PC-3 (cell line): ENCODE measurements at regions of chr11 and their contacts with region 1.

Region 1: GRCh38 chr11:111586388-111586831 is 15.8 kb upstream of the SIK2 start:
- DNase-seq: peak; percentile 85
- ATAC-seq: peak; percentile 75
- H3K4me3 ChIP-seq: no peak overlapping the region
- H3K27ac ChIP-seq: no peak overlapping the region
- H3K4me1 ChIP-seq: peaks cover 5% of the 10 kb centered on the region; the same call in 1 of the 2 replicates
- H3K27me3 ChIP-seq: no peaks in the 10 kb centered on the region
- CTCF ChIP-seq: peak; percentile 92

Region 2: DNA sequence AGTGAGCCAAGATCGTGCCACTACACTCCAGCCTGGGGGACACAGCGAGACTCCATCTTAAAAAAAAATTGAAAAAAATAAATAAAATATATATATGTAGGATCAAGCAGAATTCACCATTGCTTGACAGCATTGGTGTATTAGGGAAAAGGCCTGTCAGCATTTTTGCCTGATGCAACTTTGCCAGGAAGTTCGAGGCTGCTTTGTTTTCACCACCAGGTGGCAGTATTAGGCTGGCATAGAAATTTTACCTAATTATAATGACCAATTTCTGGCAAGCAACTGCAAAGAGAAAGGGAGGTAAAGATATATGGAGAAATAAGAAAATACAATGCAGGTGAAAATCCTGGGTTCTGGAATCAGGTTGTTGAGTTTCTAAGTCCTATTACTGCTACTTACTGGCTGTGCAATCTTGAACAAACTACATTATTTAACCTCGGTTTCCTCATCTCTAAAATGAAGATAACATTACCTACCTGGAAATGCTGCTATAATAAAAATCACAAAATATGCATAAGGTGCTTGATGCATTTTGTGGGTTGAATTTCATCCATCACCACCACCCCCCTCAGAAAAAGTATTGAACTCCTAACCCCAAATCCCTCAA is 21.2 kb before region 1 on chr11:
- CTCF ChIA-PET with region 1: no interaction called
- POLR2A ChIA-PET with region 1: interaction called, 3 read pairs
- intact Hi-C with region 1: loop called (anchors 1 kb)
- DNase-seq: peak; percentile 94
- ATAC-seq: no peak
- H3K4me3 ChIP-seq: no peak overlapping the region
- H3K27ac ChIP-seq: no peak overlapping the region
- H3K4me1 ChIP-seq: peaks cover 32% of the 10 kb centered on the region
- H3K27me3 ChIP-seq: no peaks in the 10 kb centered on the region
- CTCF ChIP-seq: peak; percentile 88

Region 3: DNA sequence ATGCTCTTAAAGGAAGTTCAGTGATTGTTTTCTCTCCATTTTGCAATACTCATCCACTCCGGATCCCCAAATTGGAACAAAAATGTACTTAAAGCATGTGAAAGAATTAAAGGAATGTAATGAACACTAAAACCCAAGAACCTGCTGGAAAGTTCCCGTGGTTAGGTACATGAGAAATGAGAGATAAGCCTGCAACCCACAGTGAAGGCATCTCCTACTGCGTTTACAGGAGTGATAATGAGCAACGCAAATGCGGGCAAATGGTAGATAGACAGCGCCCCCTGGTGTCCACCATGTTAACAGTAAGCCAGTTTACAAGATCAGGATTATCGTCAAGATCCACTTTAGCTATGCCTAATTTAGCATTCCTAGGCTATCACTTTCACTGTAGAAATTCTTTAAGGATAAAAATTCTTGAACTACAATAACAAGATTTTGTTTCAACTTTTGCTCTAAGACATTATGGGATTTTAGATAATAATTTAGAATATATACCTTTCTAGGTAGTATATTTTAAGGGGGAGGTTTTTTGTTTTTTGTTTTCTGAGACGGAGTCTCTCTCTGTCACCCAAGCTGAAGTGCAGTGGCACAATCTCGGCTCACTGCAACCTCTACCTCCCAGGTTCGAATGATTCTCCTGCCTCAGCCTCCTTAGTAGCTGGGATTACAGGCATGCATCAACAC is 255.1 kb after region 1 on chr11:
- CTCF ChIA-PET with region 1: interaction called, 3 read pairs
- POLR2A ChIA-PET with region 1: no interaction called
- intact Hi-C with region 1: loop called (anchors 1 kb)
- DNase-seq: peak; percentile 92
- ATAC-seq: peak; percentile 69
- H3K4me3 ChIP-seq: no peak overlapping the region
- H3K27ac ChIP-seq: no peak overlapping the region
- H3K4me1 ChIP-seq: peaks cover 30% of the 10 kb centered on the region
- H3K27me3 ChIP-seq: no peaks in the 10 kb centered on the region
- CTCF ChIP-seq: peak; percentile 98